ENCODE measurements at regions of chr12 and their contacts with region 1.

Region 1: GRCh38 chr12:105067511-105068031 is 16.7 kb downstream of the ALDH1L2 start:
- DNase-seq: no peak
- H3K4me3 ChIP-seq: no peak overlapping the region
- H3K27me3 ChIP-seq: no peaks in the 10 kb centered on the region
- CTCF ChIP-seq: no peak

Region 2: DNA sequence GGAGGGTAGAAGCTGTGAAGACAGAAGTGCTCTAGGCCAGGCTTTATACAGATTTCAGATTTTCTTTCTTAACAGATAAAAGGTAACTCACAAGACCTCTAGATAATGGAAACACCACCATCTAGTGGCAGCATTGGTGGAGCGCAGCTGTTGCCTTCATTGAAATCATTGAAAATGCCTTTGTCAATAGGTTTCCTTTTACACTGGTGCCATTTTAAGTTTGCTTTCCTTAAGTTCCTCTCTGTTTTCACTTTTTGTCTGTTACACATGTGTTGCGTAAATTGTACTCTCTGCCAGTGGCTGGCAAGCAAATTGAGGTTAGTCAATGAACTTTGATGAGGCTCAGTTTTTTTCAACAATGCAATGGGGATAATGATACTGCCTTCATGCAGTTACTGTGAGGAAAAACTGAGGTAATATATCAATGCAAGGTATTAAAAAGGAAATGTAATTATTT is 14.4 kb before region 1 on chr12:
- CTCF ChIA-PET with region 1: interaction called, 33 read pairs
- POLR2A ChIA-PET with region 1: no interaction called
- DNase-seq: peak; percentile 15
- H3K4me3 ChIP-seq: no peak overlapping the region
- H3K27me3 ChIP-seq: no peaks in the 10 kb centered on the region
- CTCF ChIP-seq: peak; percentile 84

Region 3: DNA sequence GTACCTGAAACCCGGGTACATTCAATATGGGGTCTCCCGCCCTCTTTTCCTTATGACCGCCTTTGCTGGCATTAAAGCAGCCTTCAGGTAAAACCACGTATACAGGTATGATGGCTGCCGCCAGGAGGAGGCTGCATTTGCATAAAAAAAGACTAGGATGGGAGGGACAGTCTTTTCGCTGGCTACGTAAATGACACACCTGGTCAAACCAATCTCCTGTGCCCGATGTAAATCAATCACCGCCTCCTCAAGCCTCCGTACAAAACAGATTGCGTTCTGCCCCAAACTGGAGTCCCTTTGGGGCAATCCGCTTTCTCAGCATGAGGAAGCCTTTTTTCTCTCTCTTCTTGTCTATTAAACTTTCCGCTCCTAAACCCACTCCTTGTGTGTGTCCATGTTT is 24.8 kb after region 1 on chr12:
- CTCF ChIA-PET with region 1: no interaction called
- POLR2A ChIA-PET with region 1: no interaction called
- DNase-seq: no peak
- H3K4me3 ChIP-seq: no peak overlapping the region
- H3K27me3 ChIP-seq: peaks cover 6% of the 10 kb centered on the region
- CTCF ChIP-seq: no peak

Region 4: GRCh38 chr12:105245291-105245690 is 177.7 kb after region 1 on chr12:
- CTCF ChIA-PET with region 1: no interaction called
- POLR2A ChIA-PET with region 1: no interaction called
- DNase-seq: no peak
- H3K4me3 ChIP-seq: no peak overlapping the region
- H3K27me3 ChIP-seq: no peaks in the 10 kb centered on the region
- CTCF ChIP-seq: no peak